GM12878 (cell line): ENCODE measurements at regions of chr1 and their contacts with region 1.

Region 1: DNA sequence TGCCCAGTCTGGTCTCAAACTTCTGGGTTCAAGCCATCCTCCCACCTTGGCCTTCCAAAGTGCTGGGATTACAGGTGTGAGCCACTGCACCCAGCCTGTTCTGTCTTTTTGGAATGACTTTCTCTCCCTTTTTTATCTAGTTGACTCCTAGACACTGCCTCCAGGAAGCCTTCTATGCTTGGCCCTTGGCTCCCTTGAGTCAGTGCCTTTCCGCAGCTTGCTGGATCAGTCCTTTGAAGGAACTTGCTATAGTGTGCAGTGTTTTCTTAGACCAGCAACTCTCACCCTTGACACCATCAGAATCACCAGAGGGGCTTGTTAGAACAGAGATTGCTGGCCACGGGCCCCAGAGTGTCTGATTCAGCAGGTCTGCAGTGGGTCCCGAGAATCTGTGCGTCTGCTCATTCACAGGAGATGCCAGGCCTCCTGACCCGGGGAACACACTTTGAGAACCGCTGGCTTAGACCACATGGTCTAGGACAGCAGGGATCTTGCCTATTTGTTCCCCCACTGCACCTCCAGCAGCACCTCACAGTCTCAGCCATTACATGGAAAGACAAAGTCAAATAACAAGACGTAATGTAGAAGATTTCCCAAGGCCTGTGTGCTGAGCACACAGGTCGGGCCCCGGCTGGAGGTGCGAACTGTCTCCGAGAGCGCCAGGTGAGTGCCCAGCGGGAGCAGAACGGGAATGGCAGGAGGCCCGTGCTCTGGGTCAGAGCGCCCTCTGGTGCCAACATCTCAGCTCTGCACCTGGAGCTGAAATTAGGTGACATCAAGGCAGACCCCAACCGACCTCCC is 27.4 kb upstream of the CTPS1 start:
- DNase-seq: no peak
- ATAC-seq: peak; percentile 88
- H3K4me3 ChIP-seq: no peak overlapping the region
- H3K27ac ChIP-seq: no peak overlapping the region
- H3K4me1 ChIP-seq: no peaks in the 10 kb centered on the region
- H3K27me3 ChIP-seq: no peaks in the 10 kb centered on the region
- CTCF ChIP-seq: peak; percentile 91 to 94 (median 92)
- EP300 ChIP-seq: no peak
- POLR2A ChIP-seq: no peak
- RAD21 ChIP-seq: peak; percentile 87

Region 2: DNA sequence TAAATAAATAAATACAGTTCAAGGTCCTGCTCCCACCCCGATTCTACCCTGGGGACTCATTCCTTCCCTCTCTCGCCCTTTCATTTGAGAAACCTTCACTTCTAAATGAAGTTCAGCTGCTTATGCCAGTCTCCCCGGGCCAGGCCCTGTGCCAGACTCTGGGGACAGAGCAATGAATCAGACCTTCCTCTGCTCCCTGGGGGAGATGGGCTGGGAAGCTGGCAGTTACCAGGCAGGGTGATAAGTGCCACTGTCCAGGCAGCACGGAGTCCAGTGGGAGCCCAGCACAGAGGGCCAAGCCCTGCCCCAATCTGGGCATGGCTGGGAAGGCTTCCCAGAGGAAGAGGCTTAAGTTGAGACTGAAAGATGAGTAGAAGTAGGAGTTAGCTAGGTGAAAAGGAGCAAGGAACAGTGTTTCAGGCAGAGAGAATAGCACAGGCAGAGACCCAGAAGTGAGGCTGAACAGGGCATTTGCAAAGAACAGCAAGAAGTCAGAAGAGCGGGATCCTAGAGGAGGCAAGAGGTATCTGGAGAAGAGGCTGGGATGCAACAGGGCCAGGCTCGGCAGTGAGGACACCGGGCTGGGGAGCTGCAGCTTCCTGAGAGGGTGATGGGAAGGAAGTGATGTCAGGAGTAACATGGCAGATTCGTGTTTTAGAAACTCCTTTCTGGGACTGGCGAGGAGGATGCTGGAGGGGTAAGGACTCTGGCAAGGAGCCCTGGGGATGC is 155.0 kb before region 1 on chr1:
- CTCF ChIA-PET with region 1: interaction called, 11 read pairs
- POLR2A ChIA-PET with region 1: no interaction called
- RAD21 ChIA-PET with region 1: no interaction called
- SMC1A ChIA-PET with region 1: no interaction called
- in situ Hi-C with region 1: no loop called
- intact Hi-C with region 1: no loop called
- DNase-seq: no peak
- ATAC-seq: no peak
- H3K4me3 ChIP-seq: no peak overlapping the region
- H3K27ac ChIP-seq: no peak overlapping the region
- H3K4me1 ChIP-seq: peaks cover 38% of the 10 kb centered on the region
- H3K27me3 ChIP-seq: no peaks in the 10 kb centered on the region
- CTCF ChIP-seq: no peak
- EP300 ChIP-seq: no peak
- POLR2A ChIP-seq: no peak
- RAD21 ChIP-seq: no peak

Region 3: DNA sequence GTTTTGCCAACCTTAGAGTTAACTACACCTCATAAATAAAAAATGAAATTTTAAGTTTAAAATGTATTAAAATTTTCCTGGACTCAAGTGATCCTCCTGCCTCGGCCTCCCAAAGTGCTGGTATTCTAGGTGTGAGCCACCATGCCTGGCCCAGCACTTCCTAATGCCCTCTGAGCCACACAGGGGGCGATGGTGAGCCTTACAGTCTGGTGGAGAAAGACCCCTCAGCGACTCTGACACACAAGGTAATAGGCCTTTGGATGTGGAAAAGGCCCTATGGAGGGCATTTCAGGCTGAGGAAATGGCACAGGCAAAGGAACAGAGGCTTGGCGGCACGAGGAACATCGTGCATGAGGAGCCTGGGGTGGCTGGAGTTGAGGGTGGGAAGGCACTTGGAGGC is 96.6 kb before region 1 on chr1:
- CTCF ChIA-PET with region 1: interaction called, 109 read pairs
- POLR2A ChIA-PET with region 1: no interaction called
- RAD21 ChIA-PET with region 1: interaction called, 41 read pairs
- SMC1A ChIA-PET with region 1: interaction called, 197 read pairs
- in situ Hi-C with region 1: no loop called
- intact Hi-C with region 1: loop called (anchors 2 kb)
- DNase-seq: no peak
- ATAC-seq: no peak
- H3K4me3 ChIP-seq: no peak overlapping the region
- H3K27ac ChIP-seq: no peak overlapping the region
- H3K4me1 ChIP-seq: peaks cover 8% of the 10 kb centered on the region
- H3K27me3 ChIP-seq: peaks cover 8 to 9% of the 10 kb centered on the region in 2 experiments; a peak in 3 of 4 replicates
- CTCF ChIP-seq: peak in 2 of 3 experiments; percentile 27 to 28; a peak in 2 of 6 replicates
- EP300 ChIP-seq: no peak
- POLR2A ChIP-seq: no peak
- RAD21 ChIP-seq: no peak

Region 4: DNA sequence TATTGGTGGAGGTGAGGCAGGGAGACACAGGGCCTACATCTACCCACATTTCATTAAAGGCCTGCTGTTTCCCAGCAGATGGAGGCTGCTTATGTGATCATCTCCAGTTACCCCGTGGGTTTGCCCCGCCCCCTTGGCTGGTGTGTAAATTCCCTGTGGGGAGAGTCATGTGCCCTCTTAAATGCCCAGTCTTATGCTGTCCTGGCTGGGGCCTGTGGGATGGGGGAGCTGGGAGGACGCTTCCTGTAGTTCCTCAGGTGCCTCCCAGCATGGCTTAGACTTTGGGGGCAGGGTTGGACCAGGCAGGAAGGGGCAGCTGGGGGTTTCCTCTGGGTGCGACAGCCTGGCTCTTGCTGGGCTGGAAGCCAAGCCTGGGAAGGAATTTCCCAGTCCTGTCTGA is 74.4 kb before region 1 on chr1:
- CTCF ChIA-PET with region 1: interaction called, 18 read pairs
- POLR2A ChIA-PET with region 1: interaction called, 9 read pairs
- RAD21 ChIA-PET with region 1: interaction called, 3 read pairs
- SMC1A ChIA-PET with region 1: interaction called, 7 read pairs
- in situ Hi-C with region 1: no loop called
- intact Hi-C with region 1: no loop called
- DNase-seq: no peak
- ATAC-seq: peak; percentile 72
- H3K4me3 ChIP-seq: no peak overlapping the region
- H3K27ac ChIP-seq: no peak overlapping the region
- H3K4me1 ChIP-seq: peaks cover 3% of the 10 kb centered on the region; the same call in 1 of the 2 replicates
- H3K27me3 ChIP-seq: no peaks in the 10 kb centered on the region
- CTCF ChIP-seq: no peak
- EP300 ChIP-seq: no peak
- POLR2A ChIP-seq: no peak
- RAD21 ChIP-seq: no peak

Region 5: GRCh38 chr1:41003640-41004220 is 51.6 kb after region 1 on chr1:
- CTCF ChIA-PET with region 1: interaction called, 21 read pairs
- POLR2A ChIA-PET with region 1: no interaction called
- RAD21 ChIA-PET with region 1: interaction called, 6 read pairs
- SMC1A ChIA-PET with region 1: interaction called, 3 read pairs
- in situ Hi-C with region 1: no loop called
- intact Hi-C with region 1: no loop called
- DNase-seq: peak; percentile 95
- ATAC-seq: peak; percentile 99
- H3K4me3 ChIP-seq: no peak overlapping the region
- H3K27ac ChIP-seq: no peak overlapping the region
- H3K4me1 ChIP-seq: peaks cover 9% of the 10 kb centered on the region
- H3K27me3 ChIP-seq: no peaks in the 10 kb centered on the region
- CTCF ChIP-seq: peak; percentile 66 to 77 (median 74); a peak in 5 of 6 replicates
- EP300 ChIP-seq: peak; percentile 20 to 42; a peak in 1 of 4 replicates
- POLR2A ChIP-seq: peak; percentile 15; the same call in 1 of the 2 replicates
- RAD21 ChIP-seq: peak; percentile 47